Naive thymus-derived CD4-positive, alpha-beta T cell (primary cell): ENCODE measurements at regions of chr16 and their contacts with region 1.

Region 1: GRCh38 chr16:2867987-2868789 is 10.2 kb upstream of the PRSS22 start:
- DNase-seq: peak; percentile 87 to 94 (median 91)
- ATAC-seq: peak; percentile 98
- H3K4me3 ChIP-seq: peak overlapping the region; percentile 70
- H3K4me3 Mint-ChIP-seq: peak overlapping the region; percentile 79 to 91 (median 86)
- H3K27ac ChIP-seq: peak overlapping the region; percentile 67
- H3K27ac Mint-ChIP-seq: peak overlapping the region; percentile 67 to 89 (median 82)
- H3K4me1 ChIP-seq: no peaks in the 10 kb centered on the region
- H3K4me1 Mint-ChIP-seq: peaks cover 0 to 23% (median 16%) of the 10 kb centered on the region in 7 donors
- H3K27me3 ChIP-seq: no peaks in the 10 kb centered on the region
- H3K27me3 Mint-ChIP-seq: peaks cover 0 to 10% (median 0%) of the 10 kb centered on the region in 5 donors

Region 2: GRCh38 chr16:2513405-2514322 is 354.5 kb before region 1 on chr16 and contains the start of gene ATP6V0C:
- CTCF ChIA-PET with region 1: no interaction called
- POLR2A ChIA-PET with region 1: no interaction called
- intact Hi-C with region 1: loop called in 1 of 2 experiments (anchors 5 kb)
- DNase-seq: peak; percentile 89 to 98 (median 94)
- ATAC-seq: peak; percentile 87
- H3K4me3 ChIP-seq: peak within 1 kb of the TSS; percentile 71
- H3K4me3 Mint-ChIP-seq: peak within 1 kb of the TSS; percentile 85 to 94 (median 91)
- H3K27ac ChIP-seq: peak within 1 kb of the TSS; percentile 100
- H3K27ac Mint-ChIP-seq: peak within 1 kb of the TSS; percentile 90 to 98 (median 96)
- H3K4me1 ChIP-seq: peaks cover 31 to 44% of the 10 kb centered on the region in 2 donors
- H3K4me1 Mint-ChIP-seq: peaks cover 36 to 60% (median 48%) of the 10 kb centered on the region in 7 donors
- H3K27me3 ChIP-seq: no peaks in the 10 kb centered on the region
- H3K27me3 Mint-ChIP-seq: peaks cover 0 to 3% (median 0%) of the 10 kb centered on the region in 5 donors
- total RNA-seq, gene ATP6V0C: 98.2 to 303 (median 113) TPM

Region 3: DNA sequence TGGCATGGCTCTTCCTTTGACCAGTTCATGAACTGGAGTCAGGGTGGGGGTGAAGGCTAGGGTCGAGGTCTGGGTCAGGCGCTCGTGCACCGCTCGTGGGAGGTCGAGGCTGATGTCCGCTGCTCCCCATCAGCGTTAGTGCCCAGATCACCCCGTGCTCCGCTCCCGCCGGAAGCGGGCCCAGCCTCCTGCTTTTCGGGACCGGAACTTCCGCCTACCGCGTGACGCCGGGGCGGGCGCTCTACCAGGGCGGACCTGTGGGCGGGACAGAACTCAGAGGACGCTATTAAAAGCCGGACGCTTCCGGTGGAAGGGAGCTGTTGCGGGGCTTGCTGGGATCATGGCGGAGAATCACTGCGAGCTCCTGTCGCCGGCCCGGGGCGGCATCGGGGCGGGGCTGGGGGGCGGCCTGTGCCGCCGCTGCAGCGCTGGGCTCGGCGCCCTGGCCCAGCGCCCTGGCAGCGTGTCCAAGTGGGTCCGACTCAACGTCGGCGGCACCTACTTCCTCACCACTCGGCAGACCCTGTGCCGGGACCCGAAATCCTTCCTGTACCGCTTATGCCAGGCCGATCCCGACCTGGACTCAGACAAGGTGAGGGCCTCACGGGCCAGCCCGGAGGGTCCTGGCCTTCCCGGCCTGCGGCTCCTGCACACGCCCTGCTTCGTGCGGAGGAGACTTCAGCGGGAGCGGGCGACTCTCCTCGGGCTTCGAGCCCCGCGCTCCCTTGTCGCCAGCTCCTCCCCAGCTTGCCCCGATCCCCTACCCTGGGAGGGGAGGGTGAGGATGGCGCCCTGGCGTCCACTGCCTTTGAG is 185.8 kb before region 1 on chr16 and contains the start of gene KCTD5:
- CTCF ChIA-PET with region 1: no interaction called
- POLR2A ChIA-PET with region 1: no interaction called
- intact Hi-C with region 1: loop called in 1 of 2 experiments (anchors 1 kb)
- DNase-seq: peak; percentile 89 to 98 (median 94)
- ATAC-seq: peak; percentile 97
- H3K4me3 ChIP-seq: peak within 1 kb of the TSS; percentile 81
- H3K4me3 Mint-ChIP-seq: peak within 1 kb of the TSS; percentile 89 to 99 (median 94)
- H3K27ac ChIP-seq: peak within 1 kb of the TSS; percentile 92
- H3K27ac Mint-ChIP-seq: peak within 1 kb of the TSS; percentile 82 to 99 (median 94)
- H3K4me1 ChIP-seq: peaks cover 8 to 18% of the 10 kb centered on the region in 2 donors
- H3K4me1 Mint-ChIP-seq: peaks cover 12 to 29% (median 25%) of the 10 kb centered on the region in 7 donors
- H3K27me3 ChIP-seq: no peaks in the 10 kb centered on the region
- H3K27me3 Mint-ChIP-seq: no peaks in the 10 kb centered on the region
- total RNA-seq, gene KCTD5: 21.4 to 37.5 (median 24.6) TPM

Region 4: GRCh38 chr16:2752035-2752849 is 115.9 kb before region 1 on chr16 and contains the start of gene SRRM2:
- CTCF ChIA-PET with region 1: no interaction called
- POLR2A ChIA-PET with region 1: interaction called, 4 read pairs
- intact Hi-C with region 1: loop called (anchors 1 kb)
- DNase-seq: peak; percentile 92 to 98 (median 96)
- ATAC-seq: peak; percentile 92
- H3K4me3 ChIP-seq: peak within 1 kb of the TSS; percentile 68
- H3K4me3 Mint-ChIP-seq: peak within 1 kb of the TSS; percentile 89 to 98 (median 94)
- H3K27ac ChIP-seq: peak within 1 kb of the TSS; percentile 100
- H3K27ac Mint-ChIP-seq: peak within 1 kb of the TSS; percentile 96 to 100 (median 99)
- H3K4me1 ChIP-seq: peaks cover 35 to 40% of the 10 kb centered on the region in 2 donors
- H3K4me1 Mint-ChIP-seq: peaks cover 37 to 57% (median 50%) of the 10 kb centered on the region in 7 donors
- H3K27me3 ChIP-seq: no peaks in the 10 kb centered on the region
- H3K27me3 Mint-ChIP-seq: no peaks in the 10 kb centered on the region
- total RNA-seq, gene SRRM2: 590 to 1,259 (median 1,020) TPM

Region 5: GRCh38 chr16:2838928-2839327 is 29.3 kb before region 1 on chr16:
- CTCF ChIA-PET with region 1: interaction called, 16 read pairs
- POLR2A ChIA-PET with region 1: no interaction called
- intact Hi-C with region 1: loop called (anchors 1 kb)
- DNase-seq: peak; percentile 33 to 57 (median 48)
- ATAC-seq: peak; percentile 79
- H3K4me3 ChIP-seq: no peak overlapping the region
- H3K4me3 Mint-ChIP-seq: peak overlapping the region in 1 of 10 donors; percentile 14
- H3K27ac ChIP-seq: no peak overlapping the region
- H3K27ac Mint-ChIP-seq: peak overlapping the region in 7 of 9 donors; percentile 18 to 66 (median 47)
- H3K4me1 ChIP-seq: peaks cover 30 to 33% of the 10 kb centered on the region in 2 donors
- H3K4me1 Mint-ChIP-seq: peaks cover 13 to 45% (median 24%) of the 10 kb centered on the region in 7 donors
- H3K27me3 ChIP-seq: no peaks in the 10 kb centered on the region
- H3K27me3 Mint-ChIP-seq: peaks cover 0 to 6% (median 0%) of the 10 kb centered on the region in 5 donors

Region 6: GRCh38 chr16:2926650-2927646 is 58.8 kb after region 1 on chr16:
- CTCF ChIA-PET with region 1: interaction called, 7 read pairs
- POLR2A ChIA-PET with region 1: interaction called, 3 read pairs
- intact Hi-C with region 1: loop called in 1 of 2 experiments (anchors 2 kb)
- DNase-seq: peak; percentile 64 to 91 (median 84)
- ATAC-seq: peak; percentile 100
- H3K4me3 ChIP-seq: no peak overlapping the region
- H3K4me3 Mint-ChIP-seq: peak overlapping the region in 7 of 10 donors; percentile 0 to 48 (median 29)
- H3K27ac ChIP-seq: no peak overlapping the region
- H3K27ac Mint-ChIP-seq: peak overlapping the region in 7 of 9 donors; percentile 0 to 63 (median 48)
- H3K4me1 ChIP-seq: peaks cover 5 to 10% of the 10 kb centered on the region in 2 donors
- H3K4me1 Mint-ChIP-seq: peaks cover 9 to 19% (median 16%) of the 10 kb centered on the region in 7 donors
- H3K27me3 ChIP-seq: no peaks in the 10 kb centered on the region
- H3K27me3 Mint-ChIP-seq: no peaks in the 10 kb centered on the region

Region 7: DNA sequence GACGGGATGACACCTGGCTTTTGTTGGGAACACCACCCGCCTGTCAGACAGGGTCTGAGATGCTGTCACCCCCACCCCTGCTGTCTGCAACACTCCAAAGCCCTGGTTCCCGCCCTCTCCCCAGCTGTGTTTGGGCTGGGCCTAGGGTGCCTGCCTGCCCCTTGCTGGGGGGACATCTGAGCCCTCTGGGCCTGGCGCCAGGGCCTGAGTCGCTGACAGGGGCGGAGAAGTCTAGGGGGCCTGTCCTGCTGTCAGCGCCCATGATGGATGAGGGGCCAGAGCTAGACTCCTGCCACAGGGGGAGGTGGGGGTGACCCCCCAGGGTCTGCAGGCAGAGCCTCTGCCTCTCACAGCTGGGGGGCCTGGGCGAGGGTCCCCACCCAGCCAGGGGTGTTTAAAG is 119.7 kb after region 1 on chr16:
- CTCF ChIA-PET with region 1: no interaction called
- POLR2A ChIA-PET with region 1: no interaction called
- intact Hi-C with region 1: no loop called
- DNase-seq: no peak
- ATAC-seq: no peak
- H3K4me3 ChIP-seq: no peak overlapping the region
- H3K4me3 Mint-ChIP-seq: no peak overlapping the region
- H3K27ac ChIP-seq: no peak overlapping the region
- H3K27ac Mint-ChIP-seq: no peak overlapping the region
- H3K4me1 ChIP-seq: no peaks in the 10 kb centered on the region
- H3K4me1 Mint-ChIP-seq: peaks cover 0 to 11% (median 0%) of the 10 kb centered on the region in 7 donors
- H3K27me3 ChIP-seq: no peaks in the 10 kb centered on the region
- H3K27me3 Mint-ChIP-seq: peaks cover 0 to 9% (median 0%) of the 10 kb centered on the region in 5 donors